ENCODE measurements at regions of chr22 and their contacts with region 1.

Region 1: GRCh38 chr22:19111140-19111539 is 11.1 kb downstream of the DGCR2 start:
- DNase-seq: peak in 1 of 35 experiments; percentile 27
- ATAC-seq: no peak
- H3K4me3 ChIP-seq: no peak overlapping the region
- H3K4me3 Mint-ChIP-seq: peak overlapping the region in 2 of 3 donors; percentile 7 to 55
- H3K27ac ChIP-seq: peak overlapping the region; percentile 87
- H3K27ac Mint-ChIP-seq: peak overlapping the region; percentile 90 to 96
- H3K4me1 ChIP-seq: peaks cover 29 to 83% of the 10 kb centered on the region in 2 experiments
- H3K4me1 Mint-ChIP-seq: peaks cover 82 to 84% (median 82%) of the 10 kb centered on the region in 3 donors
- H3K27me3 ChIP-seq: no peaks in the 10 kb centered on the region
- H3K27me3 Mint-ChIP-seq: no peaks in the 10 kb centered on the region

Region 2: DNA sequence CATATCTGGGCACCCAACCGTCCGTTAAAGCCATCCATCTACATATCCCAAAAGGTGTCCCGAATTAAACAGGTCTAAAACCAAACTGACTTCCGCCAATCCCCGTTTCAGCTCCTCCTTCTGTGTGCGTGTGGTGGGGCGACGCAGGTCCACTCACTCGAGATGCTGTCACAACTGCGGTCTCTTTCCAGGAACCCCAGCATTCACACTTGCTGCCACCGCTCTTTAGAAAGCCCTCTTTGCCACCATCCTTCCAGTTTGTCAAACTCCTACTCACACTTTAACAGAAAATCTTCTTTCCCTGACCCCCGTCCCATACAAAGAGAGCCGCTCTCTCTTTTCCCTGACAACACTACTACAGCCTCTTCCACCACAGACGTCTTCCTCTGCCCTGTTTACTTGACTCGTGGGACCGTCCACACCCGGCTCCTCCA is 32.8 kb after region 1 on chr22:
- CTCF ChIA-PET with region 1: interaction called in 1 of 2 experiments, 3 read pairs
- POLR2A ChIA-PET with region 1: interaction called, 4 to 15 read pairs
- DNase-seq: peak in 28 of 35 experiments; percentile 16 to 56 (median 32)
- ATAC-seq: peak in 2 of 4 experiments; percentile 3 to 15
- H3K4me3 ChIP-seq: peak overlapping the region; percentile 73 to 91
- H3K4me3 Mint-ChIP-seq: peak overlapping the region; percentile 98 to 100 (median 99)
- H3K27ac ChIP-seq: peak overlapping the region; percentile 82
- H3K27ac Mint-ChIP-seq: peak overlapping the region; percentile 95
- H3K4me1 ChIP-seq: peaks cover 3 to 18% of the 10 kb centered on the region in 2 experiments
- H3K4me1 Mint-ChIP-seq: peaks cover 16 to 28% (median 23%) of the 10 kb centered on the region in 3 donors
- H3K27me3 ChIP-seq: peaks cover 2 to 18% of the 10 kb centered on the region in 2 experiments
- H3K27me3 Mint-ChIP-seq: peaks cover 0 to 20% of the 10 kb centered on the region in 2 donors